ENCODE measurements at regions of chr10 and their contacts with region 1.

Region 1: DNA sequence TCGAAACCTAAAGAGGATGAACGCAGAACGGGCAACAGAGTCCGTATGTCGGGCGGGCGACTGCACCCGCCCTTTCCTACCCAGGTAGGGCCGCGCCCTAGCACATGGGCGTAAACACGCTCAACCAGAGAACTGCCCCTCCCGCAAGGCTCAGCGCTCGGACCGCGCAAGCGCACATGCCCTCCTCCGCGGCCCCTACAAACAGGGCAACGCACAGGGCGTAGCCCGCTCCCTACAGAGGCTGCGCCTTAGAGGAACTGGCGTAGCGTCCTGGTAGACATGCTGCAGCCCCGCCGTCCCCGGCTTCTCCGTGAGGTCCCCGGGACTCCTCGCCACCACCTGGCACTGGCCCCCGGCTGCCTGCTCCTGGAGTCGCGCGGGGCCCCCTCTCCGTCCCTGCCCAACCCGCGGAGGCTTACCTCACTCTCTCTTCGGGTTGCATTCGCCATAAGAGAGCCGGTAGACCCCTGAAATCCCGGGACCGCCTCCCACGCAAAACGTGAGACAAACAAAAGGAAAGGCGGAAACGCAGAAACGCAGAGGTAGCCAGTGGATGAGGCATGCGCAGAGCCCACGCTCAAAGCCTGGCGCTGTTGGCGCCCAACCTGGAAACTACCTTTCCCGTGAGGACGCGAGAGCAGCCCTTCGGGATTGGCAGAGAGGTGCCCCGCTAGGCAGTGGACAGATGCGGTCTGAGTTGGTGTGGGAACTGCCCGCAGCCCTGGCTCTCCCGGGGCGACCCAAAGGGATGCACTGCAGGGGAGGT is at the start of gene ZNF33B:
- DNase-seq: peak; percentile 96
- H3K4me3 Mint-ChIP-seq: peak within 1 kb of the TSS; percentile 97
- H3K27ac Mint-ChIP-seq: peak within 1 kb of the TSS; percentile 99
- H3K4me1 Mint-ChIP-seq: peaks cover 29% of the 10 kb centered on the region
- H3K27me3 Mint-ChIP-seq: no peaks in the 10 kb centered on the region
- total RNA-seq, gene ZNF33B: 10.4 to 14.8 TPM

Region 2: GRCh38 chr10:42513921-42514320 is 124.3 kb before region 1 on chr10:
- CTCF ChIA-PET with region 1: no interaction called
- intact Hi-C with region 1: no loop called
- DNase-seq: no peak
- H3K4me3 Mint-ChIP-seq: no peak overlapping the region
- H3K27ac Mint-ChIP-seq: no peak overlapping the region
- H3K4me1 Mint-ChIP-seq: peaks cover 2% of the 10 kb centered on the region
- H3K27me3 Mint-ChIP-seq: no peaks in the 10 kb centered on the region

Region 3: GRCh38 chr10:42618424-42618823 is 19.8 kb before region 1 on chr10:
- CTCF ChIA-PET with region 1: no interaction called
- intact Hi-C with region 1: loop called (anchors 2 kb)
- DNase-seq: no peak
- H3K4me3 Mint-ChIP-seq: no peak overlapping the region
- H3K27ac Mint-ChIP-seq: no peak overlapping the region
- H3K4me1 Mint-ChIP-seq: peaks cover 12% of the 10 kb centered on the region
- H3K27me3 Mint-ChIP-seq: no peaks in the 10 kb centered on the region

Region 4: DNA sequence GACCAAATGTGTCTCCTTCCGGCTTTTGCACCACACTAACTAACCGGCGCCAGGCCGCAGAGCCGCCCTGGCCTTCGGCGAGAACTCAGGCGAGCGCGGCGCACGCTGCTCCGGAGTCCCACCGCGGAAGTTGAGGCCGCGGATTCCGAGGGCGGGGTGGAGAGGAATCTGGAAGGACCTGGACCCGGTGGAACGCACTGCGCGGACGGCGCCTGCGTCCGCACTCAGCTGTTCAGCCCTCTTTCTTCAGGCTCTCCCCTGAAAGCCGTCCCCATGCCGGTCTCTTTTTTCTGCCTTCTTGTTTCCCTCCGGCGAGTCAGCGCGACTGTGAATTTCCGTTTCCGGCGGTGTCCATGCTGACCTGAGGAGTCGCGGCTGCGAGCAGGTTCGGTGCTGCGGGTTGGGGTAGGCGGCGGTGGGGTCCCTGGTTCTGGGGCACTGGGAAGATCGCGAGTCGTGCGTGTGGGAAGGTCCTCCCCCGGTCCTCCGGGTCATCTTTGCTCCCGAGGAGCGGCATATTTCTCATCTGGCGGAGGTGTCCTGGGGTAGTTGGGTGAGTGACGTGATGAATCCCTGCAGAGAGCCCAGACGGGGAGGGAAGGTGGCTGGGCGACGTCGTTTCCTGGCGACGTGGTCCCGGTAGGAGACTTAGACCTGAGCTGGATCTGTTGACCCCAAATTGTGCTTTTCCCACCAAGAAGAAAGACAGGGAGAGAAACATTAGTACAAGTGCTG is 144.4 kb after region 1 on chr10 and contains the start of gene BMS1:
- CTCF ChIA-PET with region 1: no interaction called
- intact Hi-C with region 1: loop called (anchors 5 kb)
- DNase-seq: peak; percentile 93
- H3K4me3 Mint-ChIP-seq: peak within 1 kb of the TSS; percentile 82
- H3K27ac Mint-ChIP-seq: peak within 1 kb of the TSS; percentile 89
- H3K4me1 Mint-ChIP-seq: peaks cover 28% of the 10 kb centered on the region
- H3K27me3 Mint-ChIP-seq: no peaks in the 10 kb centered on the region
- total RNA-seq, gene BMS1: 21.4 to 21.6 TPM

Region 5: GRCh38 chr10:42933448-42934340 is 295.5 kb after region 1 on chr10:
- CTCF ChIA-PET with region 1: no interaction called
- intact Hi-C with region 1: loop called (anchors 5 kb)
- DNase-seq: peak; percentile 56
- H3K4me3 Mint-ChIP-seq: peak overlapping the region; percentile 71
- H3K27ac Mint-ChIP-seq: no peak overlapping the region
- H3K4me1 Mint-ChIP-seq: peaks cover 13% of the 10 kb centered on the region
- H3K27me3 Mint-ChIP-seq: peaks cover 4% of the 10 kb centered on the region

Region 6: GRCh38 chr10:43138021-43138756 is 500.0 kb after region 1 on chr10 and contains the start of gene CSGALNACT2:
- CTCF ChIA-PET with region 1: no interaction called
- intact Hi-C with region 1: loop called (anchors 1 kb)
- DNase-seq: peak; percentile 88
- H3K4me3 Mint-ChIP-seq: peak within 1 kb of the TSS; percentile 97
- H3K27ac Mint-ChIP-seq: peak within 1 kb of the TSS; percentile 99
- H3K4me1 Mint-ChIP-seq: peaks cover 51% of the 10 kb centered on the region
- H3K27me3 Mint-ChIP-seq: no peaks in the 10 kb centered on the region
- total RNA-seq, gene CSGALNACT2: 25.6 to 27.1 TPM

Region 7: GRCh38 chr10:43407576-43408330 is 769.5 kb after region 1 on chr10:
- CTCF ChIA-PET with region 1: no interaction called
- intact Hi-C with region 1: loop called (anchors 5 kb)
- DNase-seq: peak; percentile 94
- H3K4me3 Mint-ChIP-seq: peak overlapping the region; percentile 88
- H3K27ac Mint-ChIP-seq: peak overlapping the region; percentile 96
- H3K4me1 Mint-ChIP-seq: peaks cover 32% of the 10 kb centered on the region
- H3K27me3 Mint-ChIP-seq: no peaks in the 10 kb centered on the region